CD8-positive, alpha-beta T cell (primary cell): ENCODE measurements at regions of chr9 and their contacts with region 1.

Region 1: DNA sequence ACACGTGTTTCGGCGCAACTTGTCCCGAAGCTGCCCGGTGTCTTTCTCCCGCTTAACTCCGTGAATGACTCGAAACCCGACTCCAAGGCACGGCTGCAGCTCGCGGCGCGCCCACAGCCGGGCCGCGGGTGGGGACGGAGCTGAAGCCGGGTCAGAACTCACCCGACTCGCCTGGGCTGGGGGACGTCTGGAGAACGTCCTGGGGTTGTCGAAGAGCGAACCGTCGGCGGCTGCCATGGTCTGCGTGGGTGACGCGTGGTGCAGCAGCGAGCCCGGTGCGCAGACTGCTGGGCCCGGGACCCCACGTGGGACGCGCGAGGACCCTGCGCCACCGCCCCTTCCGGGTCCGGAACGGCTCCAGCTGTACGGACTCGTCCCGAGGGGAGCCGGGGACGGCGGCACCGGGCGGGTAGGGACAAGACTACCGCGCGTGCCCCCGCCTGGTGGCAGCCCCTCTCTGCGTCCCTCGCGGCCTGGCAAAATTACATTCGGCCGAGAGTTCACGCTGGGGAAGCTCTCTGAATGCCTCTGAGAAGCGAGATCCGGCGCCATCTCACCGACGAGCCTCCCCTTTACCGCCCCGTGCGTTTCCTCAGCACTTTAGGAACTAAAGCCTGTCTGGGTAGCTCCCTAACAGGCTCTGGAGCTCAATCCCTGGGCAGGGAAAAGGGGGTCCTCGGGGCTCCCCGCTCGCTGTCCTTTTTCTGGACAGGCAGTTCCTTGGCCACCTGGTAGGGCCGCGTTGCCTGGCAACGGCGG is at the start of gene DDX31:
- DNase-seq: peak; percentile 79 to 94 (median 88)
- ATAC-seq: peak; percentile 77
- H3K4me3 ChIP-seq: peak within 1 kb of the TSS; percentile 100
- H3K4me3 Mint-ChIP-seq: peak within 1 kb of the TSS; percentile 91
- H3K27ac ChIP-seq: peak within 1 kb of the TSS; percentile 98 to 99
- H3K27ac Mint-ChIP-seq: peak within 1 kb of the TSS; percentile 97
- H3K4me1 ChIP-seq: peaks cover 22% of the 10 kb centered on the region
- H3K4me1 Mint-ChIP-seq: peaks cover 63% of the 10 kb centered on the region
- H3K27me3 ChIP-seq: no peaks in the 10 kb centered on the region
- H3K27me3 Mint-ChIP-seq: no peaks in the 10 kb centered on the region
- CTCF ChIP-seq: no peak
- total RNA-seq, gene DDX31: 14.1 to 15.6 TPM

Region 2: DNA sequence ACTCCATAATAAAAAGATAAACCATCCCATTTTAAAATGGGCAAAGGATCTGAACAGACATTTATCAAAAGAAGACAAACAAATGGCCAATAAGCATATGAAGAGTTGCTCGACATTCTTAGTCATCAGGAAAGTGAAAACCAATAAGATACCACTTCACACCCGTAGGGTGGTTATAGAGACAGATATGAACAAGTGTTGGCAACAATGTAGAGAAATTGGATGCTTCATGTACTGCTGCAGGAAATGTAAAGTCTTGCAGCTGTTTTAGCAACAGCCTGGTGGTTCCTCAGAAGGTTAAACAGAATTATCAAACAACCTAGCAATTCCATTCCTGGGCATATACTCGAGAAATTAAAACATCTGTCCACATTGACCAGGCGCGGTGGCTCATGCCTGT is 42.9 kb after region 1 on chr9:
- CTCF ChIA-PET with region 1: no interaction called
- POLR2A ChIA-PET with region 1: no interaction called
- intact Hi-C with region 1: no loop called
- DNase-seq: no peak
- ATAC-seq: no peak
- H3K4me3 ChIP-seq: no peak overlapping the region
- H3K4me3 Mint-ChIP-seq: no peak overlapping the region
- H3K27ac ChIP-seq: no peak overlapping the region
- H3K27ac Mint-ChIP-seq: no peak overlapping the region
- H3K4me1 ChIP-seq: no peaks in the 10 kb centered on the region
- H3K4me1 Mint-ChIP-seq: no peaks in the 10 kb centered on the region
- H3K27me3 ChIP-seq: peaks cover 0 to 3% of the 10 kb centered on the region in 2 experiments
- H3K27me3 Mint-ChIP-seq: peaks cover 25% of the 10 kb centered on the region
- CTCF ChIP-seq: no peak

Region 3: DNA sequence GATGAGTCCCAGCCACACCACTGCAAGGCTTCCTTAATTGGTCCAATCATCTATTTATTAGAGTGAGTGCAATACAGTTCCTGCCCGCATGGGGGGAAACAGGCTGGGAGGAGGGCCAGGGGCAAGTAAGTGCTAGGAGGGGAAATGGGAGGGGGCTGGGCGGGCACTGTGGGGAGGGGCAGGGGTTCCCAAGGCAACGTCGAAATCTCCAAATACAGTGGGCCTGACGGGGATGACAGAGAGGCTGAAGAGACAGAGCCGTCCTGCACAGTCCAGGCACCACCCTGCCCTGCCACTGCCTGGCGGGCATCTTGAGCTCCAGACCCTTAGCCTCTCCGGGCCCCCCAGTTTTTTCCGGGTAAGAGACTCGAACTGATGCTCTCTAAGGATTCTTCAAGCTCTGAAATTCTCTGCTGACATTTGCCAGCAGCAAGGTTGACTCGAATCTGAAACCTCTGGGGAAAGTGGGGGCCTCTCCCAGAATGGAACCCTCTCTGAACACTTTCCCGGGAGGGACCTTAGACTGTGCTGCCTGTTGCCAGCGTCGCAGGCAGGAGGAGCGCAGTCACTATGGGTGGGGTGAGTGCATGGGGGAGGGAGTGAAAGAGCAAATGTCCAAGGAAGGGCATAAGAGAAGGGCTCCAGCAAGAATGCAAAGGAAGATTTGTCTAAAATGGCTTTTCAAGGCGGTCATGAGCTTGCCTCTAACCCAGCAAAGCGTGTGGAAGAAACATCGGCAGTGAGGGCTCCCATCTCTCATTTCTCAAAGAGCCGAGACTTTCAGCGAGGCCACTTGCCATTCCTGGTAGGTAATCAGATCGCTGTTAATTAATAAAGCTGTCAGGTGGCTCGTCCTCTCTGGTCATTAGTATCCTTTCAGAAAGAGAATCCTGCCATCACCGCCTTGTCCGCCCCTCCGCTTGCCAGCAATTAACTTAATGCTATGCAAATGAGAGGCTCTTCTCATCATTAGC is 99.3 kb after region 1 on chr9:
- CTCF ChIA-PET with region 1: no interaction called
- POLR2A ChIA-PET with region 1: interaction called, 12 read pairs
- intact Hi-C with region 1: loop called (anchors 1 to 5 kb)
- DNase-seq: peak; percentile 12 to 84 (median 68)
- ATAC-seq: peak; percentile 77
- H3K4me3 ChIP-seq: peak overlapping the region; percentile 78 to 96
- H3K4me3 Mint-ChIP-seq: peak overlapping the region; percentile 97
- H3K27ac ChIP-seq: peak overlapping the region; percentile 84 to 86
- H3K27ac Mint-ChIP-seq: peak overlapping the region; percentile 95
- H3K4me1 ChIP-seq: peaks cover 6% of the 10 kb centered on the region
- H3K4me1 Mint-ChIP-seq: peaks cover 28% of the 10 kb centered on the region
- H3K27me3 ChIP-seq: no peaks in the 10 kb centered on the region
- H3K27me3 Mint-ChIP-seq: no peaks in the 10 kb centered on the region
- CTCF ChIP-seq: peak; percentile 42

Region 4: DNA sequence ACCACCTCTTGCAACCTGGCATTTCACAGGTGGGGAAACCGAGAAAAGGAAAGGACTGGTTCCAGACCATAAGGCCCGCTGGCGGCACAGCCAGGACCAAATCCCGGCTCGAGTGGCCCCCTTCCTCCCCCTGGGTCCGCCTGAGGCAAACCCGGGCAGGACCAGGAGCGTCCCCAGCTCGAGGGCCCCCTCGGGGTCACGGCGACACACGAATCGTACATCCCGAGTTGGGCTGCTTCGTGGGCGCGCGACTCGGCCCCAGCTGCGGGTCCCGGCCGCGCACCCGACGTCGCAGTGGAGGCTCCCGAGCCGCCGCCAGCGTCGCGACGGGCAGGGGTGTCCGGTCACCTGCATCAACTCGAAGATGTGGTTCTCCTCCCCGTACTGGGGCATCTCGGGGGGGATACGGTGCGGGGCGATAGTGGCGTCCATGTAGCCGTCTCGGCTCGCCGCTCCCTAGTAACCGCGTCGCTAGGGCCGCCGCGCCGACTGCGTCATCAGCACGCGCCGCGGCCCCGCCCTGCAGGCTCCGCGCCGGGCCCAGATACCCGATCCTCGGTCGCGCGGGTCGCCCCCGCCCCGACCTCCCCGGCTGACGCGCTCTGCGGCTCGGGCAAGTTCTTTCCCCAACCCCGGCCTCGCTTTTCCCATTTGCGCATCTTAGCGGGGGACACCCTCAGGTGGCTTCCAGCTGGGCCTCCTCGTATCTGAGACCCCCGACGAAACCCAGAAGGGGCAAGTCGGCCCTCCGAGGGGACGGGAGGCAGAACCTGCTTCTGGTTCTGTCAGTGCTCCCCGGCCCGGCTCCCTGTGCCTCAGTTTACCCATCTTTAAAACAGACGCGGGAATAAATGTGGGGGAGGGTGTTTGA is 208.2 kb after region 1 on chr9 and contains the start of gene AK8:
- CTCF ChIA-PET with region 1: no interaction called
- POLR2A ChIA-PET with region 1: interaction called, 4 read pairs
- intact Hi-C with region 1: loop called in 1 of 2 experiments (anchors 1 kb)
- DNase-seq: peak; percentile 55 to 88 (median 73)
- ATAC-seq: peak; percentile 88
- H3K4me3 ChIP-seq: peak within 1 kb of the TSS; percentile 96 to 98
- H3K4me3 Mint-ChIP-seq: peak within 1 kb of the TSS; percentile 81
- H3K27ac ChIP-seq: peak within 1 kb of the TSS; percentile 63 to 73
- H3K27ac Mint-ChIP-seq: peak within 1 kb of the TSS; percentile 88
- H3K4me1 ChIP-seq: peaks cover 14% of the 10 kb centered on the region
- H3K4me1 Mint-ChIP-seq: peaks cover 17% of the 10 kb centered on the region
- H3K27me3 ChIP-seq: no peaks in the 10 kb centered on the region
- H3K27me3 Mint-ChIP-seq: no peaks in the 10 kb centered on the region
- CTCF ChIP-seq: no peak
- total RNA-seq, gene AK8: not detected